ENCODE measurements at regions of chr19 and their contacts with region 1.

Region 1: GRCh38 chr19:44723952-44724319 is 24.6 kb upstream of the BCL3 start:
- DNase-seq: peak; percentile 87
- H3K4me3 ChIP-seq: no peak overlapping the region; a peak in 1 of 4 replicates
- H3K27ac ChIP-seq: no peak overlapping the region
- H3K4me1 ChIP-seq: peaks cover 0 to 11% of the 10 kb centered on the region in 2 experiments; a peak in 3 of 4 replicates
- H3K27me3 ChIP-seq: no peaks in the 10 kb centered on the region
- CTCF ChIP-seq: peak; percentile 96
- EP300 ChIP-seq: no peak
- RAD21 ChIP-seq: peak; percentile 97

Region 2: DNA sequence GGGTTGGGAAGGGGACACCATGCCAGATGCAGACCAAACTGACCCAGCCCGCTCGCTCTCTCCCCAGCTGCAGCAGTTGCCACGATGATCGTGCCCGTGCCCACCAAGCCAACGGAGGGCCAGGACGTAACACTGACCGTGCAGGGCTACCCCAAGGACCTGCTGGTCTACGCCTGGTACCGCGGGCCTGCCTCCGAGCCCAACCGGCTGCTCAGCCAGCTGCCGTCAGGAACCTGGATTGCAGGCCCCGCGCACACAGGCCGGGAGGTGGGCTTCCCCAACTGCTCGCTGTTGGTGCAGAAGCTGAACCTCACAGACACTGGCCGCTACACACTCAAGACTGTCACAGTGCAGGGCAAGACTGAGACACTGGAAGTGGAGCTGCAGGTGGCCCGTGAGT is 16.1 kb before region 1 on chr19:
- CTCF ChIA-PET with region 1: interaction called, 57 read pairs
- POLR2A ChIA-PET with region 1: no interaction called
- DNase-seq: no peak
- H3K4me3 ChIP-seq: no peak overlapping the region
- H3K27ac ChIP-seq: no peak overlapping the region
- H3K4me1 ChIP-seq: no peaks in the 10 kb centered on the region
- H3K27me3 ChIP-seq: no peaks in the 10 kb centered on the region
- CTCF ChIP-seq: no peak
- EP300 ChIP-seq: no peak
- RAD21 ChIP-seq: no peak

Region 3: DNA sequence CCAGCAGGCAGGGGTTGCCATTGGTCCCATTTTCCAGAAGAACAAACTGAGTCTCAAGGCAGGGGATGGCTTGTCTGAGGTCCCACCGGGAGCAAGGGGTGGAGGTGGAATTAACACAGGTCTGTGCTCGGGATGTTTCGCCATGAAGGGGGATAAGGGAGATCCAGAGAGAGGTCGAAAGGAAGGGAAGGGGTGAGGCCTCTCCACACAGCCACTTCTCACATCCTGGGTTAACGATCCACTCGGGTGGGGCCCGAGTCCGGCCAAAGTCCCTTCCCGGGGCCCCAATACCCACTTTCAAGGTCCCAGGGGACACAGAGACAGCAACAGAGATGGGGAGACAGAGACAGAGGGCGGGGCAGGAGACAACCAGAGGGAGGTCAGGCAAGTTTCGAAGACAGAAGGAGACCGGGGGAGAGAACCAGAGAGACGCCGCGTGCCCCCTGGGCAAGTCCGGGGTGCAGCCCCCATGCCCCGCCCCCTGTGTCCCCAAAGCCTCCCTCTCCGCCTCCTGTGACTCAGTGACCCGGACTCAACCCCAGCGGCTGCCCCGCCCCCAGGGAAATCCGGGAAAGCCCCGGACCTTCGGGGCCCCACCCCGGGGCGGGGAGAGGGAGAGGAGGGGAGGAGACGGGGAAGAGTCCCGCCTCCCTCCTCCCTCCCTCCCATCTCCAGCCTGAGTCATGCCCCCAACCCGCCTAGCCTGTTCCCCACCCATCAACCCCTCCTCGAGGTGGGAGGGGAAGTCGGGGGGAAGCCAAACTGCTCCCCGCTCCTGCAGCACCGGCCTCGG is 23.2 kb after region 1 on chr19:
- CTCF ChIA-PET with region 1: interaction called, 92 read pairs
- POLR2A ChIA-PET with region 1: no interaction called
- DNase-seq: peak; percentile 84
- H3K4me3 ChIP-seq: peak overlapping the region; percentile 59 to 67
- H3K27ac ChIP-seq: peak overlapping the region; percentile 81 to 91
- H3K4me1 ChIP-seq: peaks cover 5 to 17% of the 10 kb centered on the region in 2 experiments; a peak in 3 of 4 replicates
- H3K27me3 ChIP-seq: no peaks in the 10 kb centered on the region
- CTCF ChIP-seq: no peak
- EP300 ChIP-seq: peak in 1 of 2 experiments; percentile 46; a peak in 1 of 4 replicates
- RAD21 ChIP-seq: no peak

Region 4: GRCh38 chr19:44782729-44783128 is 58.8 kb after region 1 on chr19:
- CTCF ChIA-PET with region 1: interaction called, 598 read pairs
- POLR2A ChIA-PET with region 1: no interaction called
- DNase-seq: no peak
- H3K4me3 ChIP-seq: no peak overlapping the region
- H3K27ac ChIP-seq: no peak overlapping the region
- H3K4me1 ChIP-seq: no peaks in the 10 kb centered on the region
- H3K27me3 ChIP-seq: no peaks in the 10 kb centered on the region
- CTCF ChIP-seq: 0 out of 2 replicates have a peak, but pooled peaks have one; percentile 11
- EP300 ChIP-seq: no peak
- RAD21 ChIP-seq: no peak

Region 5: DNA sequence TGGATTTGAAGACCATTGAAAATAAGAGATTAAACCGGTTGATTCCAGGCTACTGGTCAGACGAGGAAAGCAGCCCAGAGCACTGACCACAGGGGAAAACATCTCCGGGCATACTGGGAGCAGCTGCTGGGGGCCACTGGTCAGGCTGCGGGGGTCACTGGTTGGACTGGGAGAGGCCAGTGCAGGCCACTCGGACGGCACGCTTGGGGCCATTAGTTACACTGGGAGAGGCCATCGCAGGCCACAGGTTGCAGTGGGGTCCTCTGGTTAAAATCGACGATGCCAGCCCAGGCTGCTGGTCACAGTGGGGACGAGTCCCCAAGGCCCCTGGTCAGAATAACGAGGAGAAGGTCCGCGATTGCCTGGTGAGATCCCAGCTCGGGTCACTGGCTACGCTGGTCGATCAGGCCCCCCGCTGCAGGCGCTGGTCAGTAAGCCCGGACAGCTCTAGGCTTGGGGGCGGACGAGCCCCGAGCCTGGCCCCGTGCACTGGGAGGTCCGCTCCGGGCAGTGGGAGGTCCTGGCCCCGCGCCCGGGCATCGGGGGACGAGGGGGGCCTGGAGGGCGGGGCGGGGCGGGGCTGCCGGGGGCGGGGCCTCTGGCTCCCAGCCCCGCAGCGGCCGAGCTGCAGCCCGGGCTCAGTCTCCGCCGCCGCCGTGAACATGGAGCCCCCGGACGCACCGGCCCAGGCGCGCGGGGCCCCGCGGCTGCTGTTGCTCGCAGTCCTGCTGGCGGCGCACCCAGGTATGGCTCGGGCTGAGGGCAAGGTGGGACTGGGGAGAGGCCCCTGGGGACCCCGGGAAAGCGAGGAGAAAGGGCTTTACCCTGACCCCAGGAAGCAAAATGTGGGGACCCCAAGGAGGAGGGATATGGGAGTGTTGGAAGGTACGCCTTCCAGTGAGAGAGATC is 84.8 kb after region 1 on chr19 and contains the start of gene BCAM:
- CTCF ChIA-PET with region 1: interaction called, 70 read pairs
- POLR2A ChIA-PET with region 1: no interaction called
- DNase-seq: peak; percentile 97
- H3K4me3 ChIP-seq: peak within 1 kb of the TSS; percentile 51 to 66
- H3K27ac ChIP-seq: no peak within 1 kb of the TSS
- H3K4me1 ChIP-seq: peaks cover 8 to 13% of the 10 kb centered on the region in 2 experiments; a peak in 2 of 4 replicates
- H3K27me3 ChIP-seq: peaks cover 34% of the 10 kb centered on the region
- CTCF ChIP-seq: no peak
- EP300 ChIP-seq: no peak
- RAD21 ChIP-seq: no peak
- polyA plus RNA-seq, gene BCAM: 9.7 and 34.0 TPM in 2 replicates

Measured in SK-N-SH (cell line).